Activated T-helper 2 cell treated with anti-CD3 and anti-CD28 coated beads, Interferon-gamma antibody, Interleukin-2, Interleukin-4, amounts not matched to agents 10 μg/mL and 5 μg/mL and 100 μg/mL, durations not matched to agents 14 hours and 24 hours and 36 hours (primary cell): ENCODE measurements at regions of chr1 and their contacts with region 1.

Region 1: DNA sequence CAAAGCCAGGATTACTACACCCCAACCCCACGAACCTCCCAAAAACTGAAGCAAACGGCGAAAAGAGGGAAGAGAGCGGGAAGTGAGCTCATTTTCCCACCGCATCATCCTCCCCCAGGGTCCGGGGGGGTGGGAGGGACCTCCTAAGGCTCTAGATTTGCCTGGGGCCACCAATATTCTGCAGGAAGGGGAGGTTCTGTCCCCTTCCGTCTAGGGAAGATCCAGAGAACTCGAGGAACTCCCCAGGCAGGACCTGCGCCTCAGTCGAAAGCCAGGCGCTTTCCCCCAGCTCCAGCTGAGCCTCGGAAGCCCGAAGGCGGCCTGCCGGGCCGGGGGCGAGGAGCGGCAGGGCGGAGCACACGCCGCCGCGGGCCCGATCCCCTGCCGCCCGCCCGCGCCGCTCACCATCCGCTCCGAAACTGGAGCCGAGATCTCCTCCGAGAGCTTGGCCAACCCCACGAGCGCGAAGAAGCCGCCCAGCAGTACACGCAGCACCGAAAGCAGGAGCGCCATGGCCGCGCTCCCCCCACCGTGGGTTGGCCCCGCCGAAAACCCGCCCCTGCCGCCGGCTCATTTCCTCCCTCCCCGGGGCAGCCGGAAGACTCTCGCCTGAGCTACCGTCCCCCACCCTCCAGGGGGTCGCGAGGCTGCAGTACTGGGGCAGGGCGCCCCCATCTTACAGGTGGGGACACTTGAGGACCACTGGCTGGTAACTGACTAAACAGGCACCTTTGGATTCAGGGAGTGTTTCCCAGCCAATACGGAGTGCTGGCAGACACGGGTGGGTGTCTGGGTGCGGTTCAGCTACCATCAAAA is at the start of gene TMEM35B:
- DNase-seq: peak; percentile 72
- H3K4me3 Mint-ChIP-seq: peak within 1 kb of the TSS; percentile 94
- H3K27ac Mint-ChIP-seq: peak within 1 kb of the TSS; percentile 88
- H3K4me1 Mint-ChIP-seq: peaks cover 36% of the 10 kb centered on the region
- H3K27me3 Mint-ChIP-seq: no peaks in the 10 kb centered on the region
- total RNA-seq, gene TMEM35B: 15.0 and 19.3 TPM in 2 replicates

Region 2: GRCh38 chr1:34859446-34860200 is 125.4 kb before region 1 on chr1 and contains the start of gene SMIM12:
- intact Hi-C with region 1: loop called (anchors 5 kb)
- DNase-seq: peak; percentile 86
- H3K4me3 Mint-ChIP-seq: peak within 1 kb of the TSS; percentile 98
- H3K27ac Mint-ChIP-seq: peak within 1 kb of the TSS; percentile 97
- H3K4me1 Mint-ChIP-seq: peaks cover 46% of the 10 kb centered on the region
- H3K27me3 Mint-ChIP-seq: no peaks in the 10 kb centered on the region
- total RNA-seq, gene SMIM12: 58.7 and 59.3 TPM in 2 replicates

Region 3: GRCh38 chr1:35079003-35079930 is 94.3 kb after region 1 on chr1 and contains the start of gene ZMYM1:
- intact Hi-C with region 1: loop called (anchors 1 kb)
- DNase-seq: peak; percentile 81
- H3K4me3 Mint-ChIP-seq: peak within 1 kb of the TSS; percentile 91
- H3K27ac Mint-ChIP-seq: peak within 1 kb of the TSS; percentile 99
- H3K4me1 Mint-ChIP-seq: peaks cover 32% of the 10 kb centered on the region
- H3K27me3 Mint-ChIP-seq: no peaks in the 10 kb centered on the region
- total RNA-seq, gene ZMYM1: 2.4 and 2.7 TPM in 2 replicates